K562 (cell line): ENCODE measurements at regions of chr1 and their contacts with region 1.

Region 1: DNA sequence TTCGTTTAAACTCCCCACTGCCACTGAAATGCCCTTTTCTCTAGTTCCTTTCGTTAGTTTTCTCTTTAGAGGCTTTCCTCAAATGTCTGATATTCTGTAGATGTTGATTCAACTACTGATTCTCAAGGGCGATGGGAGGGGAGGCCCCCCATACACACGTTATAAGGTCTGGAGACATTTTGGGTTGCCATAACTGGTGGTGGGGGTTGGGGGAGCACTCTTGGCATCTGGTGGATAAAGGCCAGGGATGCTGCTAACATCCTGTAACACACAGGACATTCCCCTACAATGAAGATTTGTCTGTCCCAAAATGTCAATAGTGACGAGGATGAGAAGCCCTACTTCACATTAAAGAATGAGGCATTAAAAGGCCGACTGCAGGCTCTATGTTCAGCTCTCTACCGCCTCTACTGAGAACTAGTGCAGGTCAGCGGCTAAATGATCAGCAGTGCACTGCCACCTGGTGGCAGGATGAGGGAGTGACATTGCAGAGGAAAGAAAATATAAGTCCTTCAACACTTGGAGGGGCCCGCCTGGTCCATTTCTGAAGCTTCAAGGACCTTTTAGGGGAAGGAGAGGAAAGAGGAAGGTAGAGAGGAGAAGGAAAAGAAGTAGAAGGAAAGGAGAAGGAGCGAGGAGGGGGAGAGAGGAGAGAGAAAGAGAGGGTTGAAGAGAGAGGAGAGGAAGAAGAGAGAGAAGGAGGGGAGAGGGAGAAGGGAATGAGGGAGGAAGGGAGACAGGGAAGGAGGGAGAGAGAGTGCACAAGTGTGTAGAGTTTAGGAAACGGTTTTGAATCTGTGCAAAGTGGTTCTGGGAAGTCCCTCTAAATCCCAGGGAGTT is 29.4 kb downstream of the ALG14 start:
- DNase-seq: peak; percentile 77 to 88 (median 81)
- ATAC-seq: peak; percentile 95
- H3K4me3 ChIP-seq: no peak overlapping the region
- H3K27ac ChIP-seq: no peak overlapping the region
- H3K4me1 ChIP-seq: no peaks in the 10 kb centered on the region; a peak in 1 of 5 replicates
- H3K27me3 ChIP-seq: no peaks in the 10 kb centered on the region
- CTCF ChIP-seq: peak; percentile 99 to 100 (median 100)
- EP300 ChIP-seq: no peak
- POLR2A ChIP-seq: no peak
- RAD21 ChIP-seq: peak; percentile 82 to 95

Region 2: GRCh38 chr1:94481473-94481933 is 561.9 kb before region 1 on chr1:
- CTCF ChIA-PET with region 1: no interaction called
- POLR2A ChIA-PET with region 1: no interaction called
- in situ Hi-C with region 1: no loop called
- intact Hi-C with region 1: loop called (anchors 1 kb)
- DNase-seq: peak; percentile 52 to 65 (median 59)
- ATAC-seq: peak; percentile 96
- H3K4me3 ChIP-seq: no peak overlapping the region
- H3K27ac ChIP-seq: no peak overlapping the region
- H3K4me1 ChIP-seq: no peaks in the 10 kb centered on the region
- H3K27me3 ChIP-seq: no peaks in the 10 kb centered on the region
- CTCF ChIP-seq: peak; percentile 68 to 71 (median 68)
- EP300 ChIP-seq: no peak
- POLR2A ChIP-seq: no peak
- RAD21 ChIP-seq: peak; percentile 54 to 65

Region 3: GRCh38 chr1:94514095-94514727 is 529.1 kb before region 1 on chr1:
- CTCF ChIA-PET with region 1: interaction called, 4 read pairs
- POLR2A ChIA-PET with region 1: no interaction called
- in situ Hi-C with region 1: no loop called
- intact Hi-C with region 1: loop called (anchors 10 kb)
- DNase-seq: peak in 2 of 4 experiments; percentile 25 to 54
- ATAC-seq: peak; percentile 88
- H3K4me3 ChIP-seq: no peak overlapping the region
- H3K27ac ChIP-seq: no peak overlapping the region
- H3K4me1 ChIP-seq: no peaks in the 10 kb centered on the region
- H3K27me3 ChIP-seq: no peaks in the 10 kb centered on the region
- CTCF ChIP-seq: peak; percentile 64 to 71 (median 65)
- EP300 ChIP-seq: no peak
- POLR2A ChIP-seq: no peak
- RAD21 ChIP-seq: peak; percentile 35 to 55; a peak in 3 of 4 replicates

Region 4: GRCh38 chr1:94854458-94855306 is 188.7 kb before region 1 on chr1:
- CTCF ChIA-PET with region 1: interaction called, 25 read pairs
- POLR2A ChIA-PET with region 1: interaction called, 3 read pairs
- in situ Hi-C with region 1: loop called (anchors 5 kb)
- intact Hi-C with region 1: loop called (anchors 1 kb)
- DNase-seq: peak; percentile 85 to 87 (median 86)
- ATAC-seq: peak; percentile 99
- H3K4me3 ChIP-seq: peak overlapping the region; percentile 28
- H3K27ac ChIP-seq: no peak overlapping the region
- H3K4me1 ChIP-seq: no peaks in the 10 kb centered on the region; a peak in 1 of 5 replicates
- H3K27me3 ChIP-seq: peaks cover 3 to 5% of the 10 kb centered on the region in 2 experiments; a peak in 4 of 5 replicates
- CTCF ChIP-seq: peak; percentile 91 to 92 (median 91)
- EP300 ChIP-seq: no peak
- POLR2A ChIP-seq: no peak
- RAD21 ChIP-seq: peak; percentile 87 to 94

Region 5: DNA sequence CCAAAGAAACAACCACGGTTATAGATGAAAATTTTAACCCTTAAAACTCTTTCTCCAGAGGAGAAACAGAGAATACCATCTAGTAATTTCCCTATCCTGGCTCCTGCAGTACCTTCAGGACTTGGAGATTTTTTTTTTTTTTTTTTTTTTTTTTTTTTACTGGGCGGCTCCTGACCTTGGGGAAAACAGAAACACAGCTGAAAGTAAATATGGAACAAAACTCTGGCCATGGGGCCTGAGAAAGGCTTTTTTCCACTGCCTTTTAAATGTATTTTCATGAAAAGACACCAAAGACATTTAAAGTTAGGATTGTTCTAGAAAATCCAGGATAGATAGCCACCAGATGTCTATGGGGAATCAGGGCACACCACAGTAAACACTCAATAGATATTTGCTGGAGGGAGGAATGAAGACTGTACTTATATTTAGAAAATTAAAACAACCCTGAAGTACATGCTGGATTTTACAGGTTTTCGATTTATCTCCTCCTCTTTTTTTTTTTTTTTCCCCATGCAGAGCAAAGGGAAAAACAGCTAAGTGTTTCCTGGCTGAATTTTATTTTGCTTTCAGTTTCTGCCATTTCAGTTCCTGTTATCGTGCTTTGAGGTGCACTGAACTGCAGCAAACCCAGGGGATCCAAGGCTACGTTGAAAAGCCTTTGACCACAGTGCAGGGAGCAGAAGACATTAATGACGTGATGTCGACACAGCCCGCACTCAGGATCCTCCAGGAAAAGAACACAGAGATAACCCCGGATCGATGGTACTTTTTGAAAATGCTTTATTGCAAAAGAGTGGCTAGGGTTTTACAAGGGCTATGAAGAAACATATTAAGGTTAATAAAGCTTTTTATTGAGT is 80.7 kb before region 1 on chr1:
- CTCF ChIA-PET with region 1: no interaction called
- POLR2A ChIA-PET with region 1: no interaction called
- in situ Hi-C with region 1: no loop called
- intact Hi-C with region 1: loop called (anchors 5 kb)
- DNase-seq: peak in 1 of 4 experiments; percentile 11
- ATAC-seq: peak; percentile 52; the same call in 2 of the 3 replicates
- H3K4me3 ChIP-seq: no peak overlapping the region
- H3K27ac ChIP-seq: no peak overlapping the region
- H3K4me1 ChIP-seq: no peaks in the 10 kb centered on the region
- H3K27me3 ChIP-seq: peaks cover 3 to 5% of the 10 kb centered on the region in 2 experiments; a peak in 1 of 5 replicates
- CTCF ChIP-seq: no peak
- EP300 ChIP-seq: no peak
- POLR2A ChIP-seq: no peak
- RAD21 ChIP-seq: no peak